ENCODE measurements at regions of chr5 and their contacts with region 1.

Region 1: DNA sequence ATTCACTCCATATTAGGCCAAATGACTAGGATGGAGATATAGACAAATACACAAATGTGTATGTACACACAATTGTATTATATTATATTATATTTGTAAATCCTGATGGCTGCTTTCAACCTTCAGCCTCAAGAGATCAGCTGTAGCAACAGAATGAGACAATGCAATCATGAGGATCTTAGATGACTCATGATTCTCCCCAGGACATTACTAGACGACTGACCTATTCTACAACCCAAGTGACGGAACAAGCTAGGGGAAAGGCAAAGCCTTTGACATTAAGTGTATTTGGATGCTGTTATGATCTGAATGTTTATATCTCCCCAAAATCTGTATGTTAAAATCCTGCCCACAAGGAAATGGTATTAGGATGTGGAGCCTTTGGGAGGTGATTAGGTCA is 66.5 kb downstream of the COX7C start:
- DNase-seq: no peak

Region 2: DNA sequence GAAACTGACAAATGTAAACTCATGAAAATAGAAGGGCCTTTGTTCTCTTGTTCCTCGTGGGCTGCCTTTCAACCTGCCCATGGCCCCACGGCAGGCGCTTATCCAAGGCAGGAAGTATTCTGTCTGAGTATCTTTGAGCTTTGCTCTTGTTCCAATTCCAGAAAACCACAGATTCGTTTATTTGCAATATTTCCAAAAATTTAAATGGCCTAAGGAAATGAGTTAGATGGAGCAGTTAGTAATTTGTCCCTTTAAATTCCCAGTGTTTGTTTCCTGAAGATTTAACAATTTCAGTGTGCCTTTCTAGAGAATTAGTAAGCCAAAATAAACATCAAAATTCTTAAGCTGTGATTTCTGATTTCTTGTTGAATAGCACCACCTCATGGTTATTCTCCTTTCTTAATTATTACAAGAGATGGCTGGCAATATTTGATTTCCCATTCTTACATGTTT is 284.1 kb after region 1 on chr5:
- intact Hi-C with region 1: loop called (anchors 10 kb)
- DNase-seq: no peak

Measured in cardiac septum (tissue), 1 donor.